ENCODE measurements at regions of chr17 and their contacts with region 1.

Region 1: DNA sequence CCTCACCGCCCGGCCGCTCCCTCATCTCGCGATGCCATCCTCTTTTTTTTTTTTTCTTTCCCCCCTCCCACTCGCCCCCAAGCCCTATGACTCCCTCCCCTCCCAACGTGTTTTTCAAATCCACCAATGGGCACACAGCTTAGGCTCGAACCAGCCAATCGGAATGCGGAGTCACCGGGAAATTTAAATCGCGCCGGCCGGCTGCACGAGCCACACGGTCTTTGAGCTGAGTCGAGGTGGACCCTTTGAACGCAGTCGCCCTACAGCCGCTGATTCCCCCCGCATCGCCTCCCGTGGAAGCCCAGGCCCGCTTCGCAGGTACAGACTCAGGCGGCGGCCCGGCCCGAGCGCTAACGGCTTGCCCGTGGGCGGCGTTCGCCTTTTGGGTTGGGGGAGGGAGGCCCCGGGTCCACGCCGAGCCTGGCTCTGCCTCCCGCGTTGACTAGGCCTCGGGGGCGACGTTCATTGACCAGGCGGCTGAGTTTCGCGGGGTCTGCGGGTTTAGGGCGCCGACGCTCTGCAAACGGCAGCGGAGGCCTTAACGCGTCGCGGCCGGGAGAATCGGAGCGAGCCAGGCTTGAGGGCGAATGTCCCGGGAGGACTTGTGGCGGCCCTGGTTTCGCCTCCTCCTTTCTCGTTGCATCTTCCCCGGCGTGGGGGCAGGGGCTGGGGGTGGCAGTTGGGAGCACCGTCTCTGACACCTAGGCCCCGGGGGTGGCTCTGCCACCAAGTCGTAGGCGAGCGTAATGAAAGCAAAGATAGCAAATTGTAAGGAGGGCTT is at the start of gene KPNA2:
- DNase-seq: peak; percentile 97
- H3K4me3 ChIP-seq: peak within 1 kb of the TSS; percentile 79 to 95 (median 82)
- H3K27ac ChIP-seq: peak within 1 kb of the TSS; percentile 75 to 88 (median 80)
- H3K4me1 ChIP-seq: peaks cover 0 to 28% (median 11%) of the 10 kb centered on the region in 4 donors
- H3K27me3 ChIP-seq: no peaks in the 10 kb centered on the region
- CTCF ChIP-seq: no peak
- EP300 ChIP-seq: no peak
- POLR2A ChIP-seq: peak; percentile 30 to 46
- total RNA-seq, gene KPNA2: 7.4 to 17.0 (median 13.0) TPM

Region 2: DNA sequence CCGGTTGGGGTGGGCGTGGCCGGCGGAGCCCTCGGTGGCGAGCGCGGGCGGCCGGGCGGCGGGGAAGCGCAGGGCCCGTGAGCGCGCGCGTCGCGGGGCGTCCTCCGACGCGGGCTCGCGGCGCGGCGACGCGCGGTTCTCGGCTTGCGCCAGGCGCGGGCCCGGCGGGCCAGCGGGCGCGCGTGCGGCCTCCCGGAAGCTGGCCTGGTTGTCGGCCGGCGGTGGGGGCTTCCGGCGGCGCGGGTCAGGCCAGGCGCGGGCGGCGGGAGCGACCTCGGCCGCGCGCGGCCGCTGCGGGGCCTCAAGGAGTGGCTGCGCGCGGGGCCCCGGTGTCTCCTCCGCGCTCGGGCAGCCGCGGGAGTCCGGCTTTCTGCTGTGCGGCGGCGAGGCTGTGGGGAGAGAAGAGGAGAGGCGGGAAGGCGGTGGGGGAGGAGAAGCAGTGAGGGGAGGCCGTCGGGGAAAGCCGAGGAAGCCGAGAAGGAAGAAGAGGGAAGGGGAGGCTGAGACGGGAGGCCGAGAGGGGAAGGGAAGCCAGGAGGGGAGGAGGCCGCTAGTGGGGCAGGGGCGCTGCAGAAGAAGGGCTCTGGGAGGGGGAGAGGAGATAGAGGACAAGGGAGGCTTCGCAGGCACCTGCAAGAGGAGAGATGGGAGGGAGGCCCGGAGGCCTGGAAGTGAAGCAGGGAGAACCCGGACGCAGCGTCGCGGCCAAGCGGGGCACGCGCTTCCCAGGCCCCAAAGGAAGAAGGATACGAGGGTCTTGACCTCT is 41.9 kb before region 1 on chr17:
- intact Hi-C with region 1: loop called (anchors 5 kb)
- DNase-seq: peak; percentile 90
- H3K4me3 ChIP-seq: peak overlapping the region; percentile 64 to 78 (median 70)
- H3K27ac ChIP-seq: peak overlapping the region; percentile 94 to 96 (median 96)
- H3K4me1 ChIP-seq: peaks cover 0 to 33% (median 23%) of the 10 kb centered on the region in 4 donors
- H3K27me3 ChIP-seq: no peaks in the 10 kb centered on the region
- CTCF ChIP-seq: no peak
- EP300 ChIP-seq: no peak
- POLR2A ChIP-seq: peak in 1 of 2 donors; percentile 41

Region 3: GRCh38 chr17:68019675-68020408 is 15.9 kb before region 1 on chr17:
- intact Hi-C with region 1: loop called (anchors 2 kb)
- DNase-seq: peak; percentile 97
- H3K4me3 ChIP-seq: peak overlapping the region; percentile 45 to 66 (median 56)
- H3K27ac ChIP-seq: peak overlapping the region; percentile 84 to 92 (median 88)
- H3K4me1 ChIP-seq: peaks cover 0 to 6% (median 5%) of the 10 kb centered on the region in 4 donors
- H3K27me3 ChIP-seq: no peaks in the 10 kb centered on the region
- CTCF ChIP-seq: peak in 2 of 4 experiments; percentile 41 to 50
- EP300 ChIP-seq: peak in 1 of 4 donors; percentile 7
- POLR2A ChIP-seq: peak in 1 of 2 donors; percentile 12

Region 4: DNA sequence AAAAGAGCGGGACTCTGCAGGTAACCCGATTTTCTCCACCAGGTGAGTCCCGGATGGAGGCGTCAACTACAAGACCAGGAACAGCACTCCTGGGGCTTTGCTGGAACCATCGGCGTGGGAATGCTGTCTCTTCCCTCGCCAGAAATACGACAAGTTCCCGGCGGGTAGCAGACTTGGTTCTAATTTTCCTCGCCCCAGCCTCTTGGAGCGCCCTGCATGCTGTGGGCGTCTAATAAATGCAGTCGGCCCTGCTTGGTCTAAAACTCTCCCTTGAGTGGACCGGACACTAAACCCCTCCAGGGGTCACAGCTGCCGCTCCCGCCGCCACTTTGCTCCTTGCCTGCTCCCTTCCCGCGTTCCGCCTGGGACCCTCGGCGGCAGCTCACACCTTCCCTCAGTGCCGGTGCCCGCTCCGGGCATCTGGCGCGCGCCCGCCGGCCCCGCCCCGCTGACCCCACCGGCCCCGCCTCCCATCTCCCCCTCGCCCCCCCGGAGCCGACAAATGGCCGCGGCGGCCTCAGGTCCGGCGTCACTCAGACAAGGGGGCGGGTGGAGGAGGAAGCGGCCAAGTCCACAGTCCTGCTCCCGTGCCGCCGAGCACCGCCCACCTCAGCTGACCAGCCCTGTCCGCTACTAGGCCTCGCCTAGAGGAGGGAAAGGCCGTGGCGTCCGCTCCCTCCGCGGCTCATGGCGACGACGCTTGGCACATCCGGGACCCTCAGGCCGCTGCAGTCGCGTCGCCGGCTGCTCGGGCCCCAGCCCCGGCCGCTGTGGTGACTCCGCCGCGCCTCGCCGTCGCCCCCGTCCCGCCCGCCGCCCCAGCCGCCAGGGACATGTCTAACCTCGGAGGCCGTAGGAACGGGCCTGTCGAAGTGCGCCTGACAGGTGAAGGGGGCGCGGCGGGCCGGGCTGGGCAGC is 65.6 kb after region 1 on chr17:
- intact Hi-C with region 1: loop called (anchors 2 kb)
- DNase-seq: peak; percentile 97
- H3K4me3 ChIP-seq: peak overlapping the region; percentile 62 to 93 (median 87)
- H3K27ac ChIP-seq: peak overlapping the region; percentile 90 to 95 (median 92)
- H3K4me1 ChIP-seq: peaks cover 0 to 22% (median 11%) of the 10 kb centered on the region in 4 donors
- H3K27me3 ChIP-seq: no peaks in the 10 kb centered on the region
- CTCF ChIP-seq: no peak
- EP300 ChIP-seq: no peak
- POLR2A ChIP-seq: peak; percentile 28 to 56

Region 5: GRCh38 chr17:68512247-68512982 is 476.7 kb after region 1 on chr17 and contains the start of gene PRKAR1A:
- intact Hi-C with region 1: loop called (anchors 5 kb)
- DNase-seq: peak; percentile 98
- H3K4me3 ChIP-seq: peak within 1 kb of the TSS; percentile 72 to 95 (median 88)
- H3K27ac ChIP-seq: peak within 1 kb of the TSS; percentile 97 to 99 (median 98)
- H3K4me1 ChIP-seq: peaks cover 0 to 32% (median 27%) of the 10 kb centered on the region in 4 donors
- H3K27me3 ChIP-seq: no peaks in the 10 kb centered on the region
- CTCF ChIP-seq: no peak
- EP300 ChIP-seq: peak in 2 of 4 donors; percentile 7 to 58
- POLR2A ChIP-seq: peak; percentile 74 to 84
- total RNA-seq, gene PRKAR1A: 206 to 268 (median 230) TPM